Activated T-helper 2 cell treated with anti-CD3 and anti-CD28 coated beads, Interferon-gamma antibody, Interleukin-2, Interleukin-4, amounts not matched to agents 10 μg/mL and 5 μg/mL and 100 μg/mL, durations not matched to agents 14 hours and 24 hours and 36 hours (primary cell): ENCODE measurements at regions of chr11 and their contacts with region 1.

Region 1: DNA sequence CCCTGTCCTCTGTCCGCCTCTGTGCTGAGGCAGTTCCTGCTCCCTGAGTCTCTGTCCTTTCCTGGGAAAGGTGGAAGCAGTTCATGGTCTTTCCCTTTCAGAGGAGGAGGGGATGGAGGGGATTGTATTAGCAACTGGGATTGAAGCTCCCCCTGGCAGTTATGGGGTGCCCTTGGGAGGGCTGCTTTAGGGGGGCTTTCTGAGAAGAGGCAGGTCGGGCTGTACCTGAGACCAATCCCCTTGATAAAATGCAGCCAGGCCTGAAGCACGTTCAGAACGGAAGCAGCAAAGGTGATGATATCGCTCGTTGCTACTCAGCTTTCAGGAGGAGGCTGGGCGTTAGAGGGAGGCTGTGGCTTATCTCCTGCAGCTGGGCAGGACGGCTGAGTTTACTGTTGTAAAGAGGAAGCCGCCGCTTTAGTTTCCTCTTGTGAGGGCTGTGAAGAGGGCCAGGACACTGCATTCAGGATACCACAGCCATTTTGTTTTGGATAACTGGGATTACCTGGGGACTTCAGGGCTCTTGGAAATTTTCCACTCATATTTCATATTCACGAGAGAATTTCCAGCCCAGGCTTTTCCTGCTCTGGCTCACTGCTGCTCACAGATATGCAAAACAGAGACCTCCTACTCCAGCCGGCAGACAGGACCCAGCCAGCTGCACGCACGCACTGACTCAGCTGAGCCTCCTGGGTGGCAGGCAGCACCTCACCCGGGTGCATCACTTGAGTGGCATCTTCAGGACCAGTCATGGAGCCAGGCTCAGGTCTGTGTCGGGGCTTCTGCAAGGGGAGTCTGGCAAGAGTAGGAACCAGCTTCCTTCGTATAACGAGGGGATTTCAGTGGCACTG is 798 bp downstream of the AMPD3 start:
- DNase-seq: peak; percentile 71
- H3K4me3 Mint-ChIP-seq: peak overlapping the region; percentile 88
- H3K27ac Mint-ChIP-seq: peak overlapping the region; percentile 84
- H3K4me1 Mint-ChIP-seq: peaks cover 74% of the 10 kb centered on the region
- H3K27me3 Mint-ChIP-seq: peaks cover 6% of the 10 kb centered on the region

Region 2: DNA sequence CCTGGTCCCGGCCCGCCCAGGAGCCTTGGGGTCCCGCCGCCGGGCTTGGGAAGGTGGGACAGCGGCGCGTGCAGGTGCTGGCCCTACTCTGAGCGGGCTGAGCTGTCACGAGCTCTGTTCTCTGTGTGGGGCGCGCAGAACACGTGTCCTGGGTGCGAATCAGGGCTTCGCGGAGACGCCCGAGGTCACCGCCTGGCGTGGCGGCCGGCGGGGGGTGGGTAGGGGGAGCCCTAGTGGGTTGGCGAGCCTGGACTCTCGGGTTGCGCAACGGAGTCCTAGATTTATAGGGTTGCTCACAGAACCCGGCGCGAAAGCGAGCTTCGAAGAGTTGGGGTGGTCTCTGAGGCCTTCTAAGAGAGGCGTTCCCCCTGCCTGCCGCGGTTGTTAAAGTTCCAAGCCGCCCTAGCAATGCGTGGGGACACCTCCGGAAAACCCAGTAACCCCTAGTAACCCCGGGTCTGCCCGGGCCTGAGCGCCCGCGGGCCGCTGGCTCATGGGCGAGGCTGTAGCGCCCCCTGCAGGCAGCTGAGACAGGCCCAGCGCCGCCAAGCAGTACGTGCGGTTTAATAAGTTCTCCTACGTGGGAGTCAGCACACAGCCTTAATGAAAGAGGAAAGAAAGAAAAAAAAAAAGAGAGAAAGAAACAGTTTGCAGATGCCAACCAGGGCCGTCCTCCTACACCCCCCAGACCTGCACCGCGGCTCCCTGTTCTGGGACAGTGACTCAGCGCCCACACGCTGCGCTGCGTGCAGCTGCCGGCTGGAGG is 148.2 kb before region 1 on chr11:
- intact Hi-C with region 1: loop called (anchors 10 kb)
- DNase-seq: peak; percentile 70
- H3K4me3 Mint-ChIP-seq: peak overlapping the region; percentile 69
- H3K27ac Mint-ChIP-seq: peak overlapping the region; percentile 69
- H3K4me1 Mint-ChIP-seq: peaks cover 50% of the 10 kb centered on the region
- H3K27me3 Mint-ChIP-seq: peaks cover 61% of the 10 kb centered on the region

Region 3: GRCh38 chr11:10443152-10443551 is 12.7 kb before region 1 on chr11:
- intact Hi-C with region 1: loop called (anchors 1 kb)
- DNase-seq: no peak
- H3K4me3 Mint-ChIP-seq: no peak overlapping the region
- H3K27ac Mint-ChIP-seq: peak overlapping the region; percentile 75
- H3K4me1 Mint-ChIP-seq: peaks cover 49% of the 10 kb centered on the region
- H3K27me3 Mint-ChIP-seq: peaks cover 4% of the 10 kb centered on the region

Region 4: DNA sequence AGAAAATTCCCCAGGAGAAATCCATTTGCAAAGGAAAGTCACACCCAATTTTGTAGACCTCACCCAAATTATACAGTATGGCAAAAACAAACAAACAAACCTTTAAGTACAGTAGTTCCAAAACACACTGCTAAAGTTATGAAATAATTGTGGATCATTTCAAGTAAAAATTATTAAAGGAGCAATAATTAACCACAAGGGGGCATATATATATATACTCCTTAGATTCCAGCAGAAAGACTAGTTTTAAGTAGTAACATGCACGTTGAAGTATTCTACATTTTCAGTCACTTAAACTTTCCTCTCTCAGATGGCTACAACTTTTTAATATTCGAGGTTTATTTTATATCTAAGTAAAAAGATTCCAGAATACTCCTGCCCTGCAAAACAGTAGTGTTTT is 58.3 kb after region 1 on chr11:
- intact Hi-C with region 1: no loop called
- DNase-seq: no peak
- H3K4me3 Mint-ChIP-seq: no peak overlapping the region
- H3K27ac Mint-ChIP-seq: no peak overlapping the region
- H3K4me1 Mint-ChIP-seq: peaks cover 2% of the 10 kb centered on the region
- H3K27me3 Mint-ChIP-seq: no peaks in the 10 kb centered on the region

Region 5: GRCh38 chr11:10540923-10541560 is 85.2 kb after region 1 on chr11 and contains the start of gene RNF141:
- intact Hi-C with region 1: loop called (anchors 2 kb)
- DNase-seq: peak; percentile 92
- H3K4me3 Mint-ChIP-seq: peak within 1 kb of the TSS; percentile 89
- H3K27ac Mint-ChIP-seq: peak within 1 kb of the TSS; percentile 60
- H3K4me1 Mint-ChIP-seq: peaks cover 17% of the 10 kb centered on the region
- H3K27me3 Mint-ChIP-seq: peaks cover 1% of the 10 kb centered on the region
- total RNA-seq, gene RNF141: 13.2 and 15.6 TPM in 2 replicates

Region 6: GRCh38 chr11:10742471-10743208 is 286.8 kb after region 1 on chr11:
- intact Hi-C with region 1: loop called (anchors 2 kb)
- DNase-seq: no peak
- H3K4me3 Mint-ChIP-seq: peak overlapping the region; percentile 3
- H3K27ac Mint-ChIP-seq: peak overlapping the region; percentile 0
- H3K4me1 Mint-ChIP-seq: peaks cover 32% of the 10 kb centered on the region
- H3K27me3 Mint-ChIP-seq: no peaks in the 10 kb centered on the region

Region 7: DNA sequence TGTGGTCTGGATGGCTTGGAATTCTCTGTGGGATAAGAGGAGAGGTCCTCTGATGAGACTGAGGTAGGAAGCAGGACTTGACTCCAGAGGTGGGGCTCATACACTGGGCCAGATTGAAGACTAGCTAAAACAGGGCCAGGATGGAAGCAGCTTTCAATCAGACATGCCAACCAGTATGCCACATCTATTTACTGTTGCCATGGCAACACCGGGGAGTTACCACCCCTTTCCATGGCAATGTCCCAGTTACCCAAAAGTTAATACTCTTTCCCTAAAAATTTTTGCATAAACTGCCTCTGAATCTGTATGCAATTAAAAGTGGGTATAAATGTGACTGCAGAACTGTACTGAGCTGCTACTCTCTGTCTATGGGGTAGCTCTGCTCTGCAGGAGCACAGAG is 649.5 kb after region 1 on chr11:
- intact Hi-C with region 1: no loop called
- DNase-seq: no peak
- H3K4me3 Mint-ChIP-seq: no peak overlapping the region
- H3K27ac Mint-ChIP-seq: no peak overlapping the region
- H3K4me1 Mint-ChIP-seq: no peaks in the 10 kb centered on the region
- H3K27me3 Mint-ChIP-seq: peaks cover 3% of the 10 kb centered on the region

Region 8: DNA sequence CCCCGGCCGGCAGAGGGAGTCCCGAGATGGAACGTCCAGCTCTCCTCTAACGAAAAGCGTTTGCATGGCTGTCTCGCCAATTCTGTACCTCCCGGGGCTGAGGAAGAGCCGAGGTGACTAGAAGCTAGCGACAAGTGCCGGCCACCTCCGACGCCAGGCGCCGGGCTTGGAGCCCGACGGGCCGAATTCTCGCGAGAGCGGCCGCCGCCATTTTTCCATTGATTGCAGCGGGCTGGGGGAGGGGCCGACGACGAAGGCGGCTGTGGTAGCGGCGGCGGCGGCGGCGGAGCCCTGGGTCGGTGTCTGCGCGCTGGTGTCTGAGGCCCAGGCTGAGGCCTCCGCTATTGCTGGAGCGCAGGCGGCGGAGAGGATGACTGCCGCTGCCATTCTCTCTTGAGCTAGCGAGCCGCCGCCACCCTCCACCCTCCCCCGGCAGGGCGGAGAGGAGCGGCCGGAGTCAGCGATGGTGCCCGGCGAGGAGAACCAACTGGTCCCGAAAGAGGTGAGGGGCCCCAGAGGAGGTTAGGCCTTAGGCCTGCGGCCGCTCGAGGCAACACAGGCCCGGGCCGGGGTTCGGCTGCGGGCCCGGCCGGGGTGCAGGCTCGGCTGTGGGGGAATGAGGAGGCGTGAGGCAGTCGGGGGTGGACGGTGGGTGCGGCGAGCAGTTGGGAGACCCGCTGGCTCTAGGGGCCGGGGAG is 1386.0 kb after region 1 on chr11 and contains the start of gene USP47:
- intact Hi-C with region 1: loop called (anchors 5 kb)
- DNase-seq: peak; percentile 92
- H3K4me3 Mint-ChIP-seq: no peak within 1 kb of the TSS
- H3K27ac Mint-ChIP-seq: peak within 1 kb of the TSS; percentile 64
- H3K4me1 Mint-ChIP-seq: peaks cover 5% of the 10 kb centered on the region
- H3K27me3 Mint-ChIP-seq: peaks cover 18% of the 10 kb centered on the region
- total RNA-seq, gene USP47: 52.1 and 55.8 TPM in 2 replicates